Calu3 (cell line): ENCODE measurements at regions of chr7 and their contacts with region 1.

Region 1: DNA sequence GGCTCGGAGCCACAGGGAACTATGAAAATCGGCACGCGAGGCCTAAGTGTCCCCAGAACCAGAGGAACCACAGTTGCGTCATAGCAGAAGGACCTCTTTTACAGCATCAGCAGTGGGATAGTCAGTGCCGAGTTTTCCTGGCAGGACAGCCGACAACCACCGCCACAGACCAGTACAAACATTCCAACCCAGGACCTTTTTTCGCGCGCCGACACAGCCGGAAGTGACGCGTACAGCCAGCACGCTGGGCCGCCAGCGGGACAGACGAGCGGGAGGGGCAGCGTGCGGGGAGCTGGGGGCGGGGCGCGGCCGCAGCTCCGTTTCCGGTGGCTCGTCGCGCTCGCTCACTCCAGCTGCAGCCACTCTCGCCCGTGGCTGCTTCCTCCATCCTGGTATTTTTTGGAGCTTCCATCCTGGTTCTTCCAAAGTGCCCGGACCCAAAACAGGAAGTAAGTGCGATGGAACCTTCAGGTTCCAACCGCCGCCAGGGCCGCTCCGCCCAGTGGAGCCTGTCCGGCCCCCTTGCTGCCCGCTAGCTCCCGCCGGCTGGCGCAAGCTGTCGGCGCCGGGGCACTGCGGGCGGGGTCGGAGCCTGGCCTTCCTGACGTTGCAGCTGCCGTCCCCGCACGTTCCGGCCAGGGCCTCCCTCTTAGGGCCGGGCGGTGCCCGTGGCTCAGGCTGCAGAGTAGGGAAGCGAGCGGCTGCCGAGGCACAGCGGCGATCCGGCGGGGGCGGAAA is at the start of gene DMTF1:
- DNase-seq: peak; percentile 84
- H3K4me3 Mint-ChIP-seq: peak within 1 kb of the TSS; percentile 92
- H3K27ac Mint-ChIP-seq: peak within 1 kb of the TSS; percentile 98
- H3K4me1 Mint-ChIP-seq: no peaks in the 10 kb centered on the region
- H3K27me3 Mint-ChIP-seq: no peaks in the 10 kb centered on the region
- CTCF ChIP-seq: no peak
- total RNA-seq, gene DMTF1: 58.3 and 64.0 TPM in 2 replicates

Region 2: DNA sequence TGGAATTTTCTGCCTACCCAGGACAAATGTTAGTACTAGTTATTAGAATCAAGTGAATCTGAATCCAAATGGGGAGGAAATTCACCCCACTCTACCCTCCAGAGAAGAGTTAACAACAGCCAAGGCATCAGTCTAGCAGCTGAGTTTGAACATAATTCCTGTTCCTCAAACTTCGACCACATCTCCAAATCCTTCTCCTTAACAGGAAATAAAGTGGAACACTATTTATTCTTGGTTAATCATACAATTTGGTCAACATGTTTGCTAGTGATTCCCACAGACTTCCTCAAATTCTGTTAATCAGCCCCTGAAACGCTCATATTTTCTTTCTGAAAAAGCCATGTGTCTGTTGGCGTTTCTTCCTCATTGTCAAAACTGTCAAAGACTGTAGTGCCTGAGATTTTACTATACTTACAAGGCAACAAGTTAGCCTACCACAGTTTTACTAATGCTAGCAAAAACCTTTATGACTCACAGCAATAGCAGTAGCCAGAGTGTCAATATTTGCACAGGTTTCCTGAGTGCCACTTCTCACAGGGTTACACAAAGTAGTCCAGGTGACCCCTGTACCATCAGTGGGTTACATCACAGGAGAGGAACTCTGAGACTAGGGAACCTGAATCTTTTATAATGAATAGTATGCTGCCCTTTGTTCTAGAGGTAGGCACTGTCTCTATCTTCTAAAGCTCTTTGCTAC is 305.6 kb before region 1 on chr7:
- CTCF ChIA-PET with region 1: no interaction called
- intact Hi-C with region 1: loop called (anchors 10 kb)
- DNase-seq: peak; percentile 43
- H3K4me3 Mint-ChIP-seq: peak overlapping the region; percentile 48
- H3K27ac Mint-ChIP-seq: peak overlapping the region; percentile 92
- H3K4me1 Mint-ChIP-seq: peaks cover 13% of the 10 kb centered on the region
- H3K27me3 Mint-ChIP-seq: no peaks in the 10 kb centered on the region
- CTCF ChIP-seq: no peak

Region 3: GRCh38 chr7:86926732-86927131 is 225.5 kb before region 1 on chr7:
- CTCF ChIA-PET with region 1: no interaction called
- intact Hi-C with region 1: loop called (anchors 1 kb)
- DNase-seq: peak; percentile 3
- H3K4me3 Mint-ChIP-seq: no peak overlapping the region
- H3K27ac Mint-ChIP-seq: no peak overlapping the region
- H3K4me1 Mint-ChIP-seq: no peaks in the 10 kb centered on the region
- H3K27me3 Mint-ChIP-seq: no peaks in the 10 kb centered on the region
- CTCF ChIP-seq: peak; percentile 21

Region 4: GRCh38 chr7:86939197-86939814 is 213.0 kb before region 1 on chr7:
- CTCF ChIA-PET with region 1: no interaction called
- intact Hi-C with region 1: loop called (anchors 1 kb)
- DNase-seq: peak; percentile 55
- H3K4me3 Mint-ChIP-seq: no peak overlapping the region
- H3K27ac Mint-ChIP-seq: no peak overlapping the region
- H3K4me1 Mint-ChIP-seq: no peaks in the 10 kb centered on the region
- H3K27me3 Mint-ChIP-seq: peaks cover 12% of the 10 kb centered on the region
- CTCF ChIP-seq: no peak

Region 5: GRCh38 chr7:87129848-87130247 is 22.4 kb before region 1 on chr7:
- CTCF ChIA-PET with region 1: no interaction called
- intact Hi-C with region 1: no loop called
- DNase-seq: no peak
- H3K4me3 Mint-ChIP-seq: no peak overlapping the region
- H3K27ac Mint-ChIP-seq: no peak overlapping the region
- H3K4me1 Mint-ChIP-seq: no peaks in the 10 kb centered on the region
- H3K27me3 Mint-ChIP-seq: no peaks in the 10 kb centered on the region
- CTCF ChIP-seq: no peak

Region 6: DNA sequence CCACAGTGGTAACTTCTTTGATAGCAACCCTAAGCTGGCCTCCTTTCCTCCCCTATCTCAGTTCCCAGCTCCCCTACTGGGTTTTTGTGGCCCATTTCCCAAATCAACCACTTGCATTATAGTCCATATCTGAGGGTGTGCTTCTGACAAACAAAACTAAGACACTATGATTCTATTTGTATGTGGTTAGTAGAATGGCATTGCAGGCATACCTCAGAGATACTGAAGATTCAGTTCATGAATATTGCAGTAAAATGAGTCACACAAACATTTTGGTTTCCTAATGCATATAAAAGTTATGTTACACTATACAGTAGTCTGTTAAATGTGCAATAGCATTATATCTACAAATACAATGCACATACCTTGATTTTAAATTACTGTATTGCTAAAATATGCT is 82.7 kb after region 1 on chr7:
- CTCF ChIA-PET with region 1: no interaction called
- intact Hi-C with region 1: loop called (anchors 5 kb)
- DNase-seq: no peak
- H3K4me3 Mint-ChIP-seq: no peak overlapping the region
- H3K27ac Mint-ChIP-seq: no peak overlapping the region
- H3K4me1 Mint-ChIP-seq: peaks cover 8% of the 10 kb centered on the region
- H3K27me3 Mint-ChIP-seq: peaks cover 16% of the 10 kb centered on the region
- CTCF ChIP-seq: no peak

Region 7: GRCh38 chr7:87564289-87564963 is 412.1 kb after region 1 on chr7:
- CTCF ChIA-PET with region 1: no interaction called
- intact Hi-C with region 1: no loop called
- DNase-seq: peak; percentile 69
- H3K4me3 Mint-ChIP-seq: no peak overlapping the region
- H3K27ac Mint-ChIP-seq: no peak overlapping the region
- H3K4me1 Mint-ChIP-seq: peaks cover 8% of the 10 kb centered on the region
- H3K27me3 Mint-ChIP-seq: no peaks in the 10 kb centered on the region
- CTCF ChIP-seq: peak; percentile 33